Activated CD4-positive, alpha-beta memory T cell treated with anti-CD3 and anti-CD28 coated beads for 36 hours (primary cell): ENCODE measurements at regions of chr5 and their contacts with region 1.

Region 1: GRCh38 chr5:41875121-41875520 is 4.9 kb upstream of the OXCT1 start:
- DNase-seq: no peak
- H3K4me3 Mint-ChIP-seq: no peak overlapping the region
- H3K27ac Mint-ChIP-seq: no peak overlapping the region
- H3K4me1 Mint-ChIP-seq: peaks cover 24% of the 10 kb centered on the region
- H3K27me3 Mint-ChIP-seq: peaks cover 1% of the 10 kb centered on the region

Region 2: DNA sequence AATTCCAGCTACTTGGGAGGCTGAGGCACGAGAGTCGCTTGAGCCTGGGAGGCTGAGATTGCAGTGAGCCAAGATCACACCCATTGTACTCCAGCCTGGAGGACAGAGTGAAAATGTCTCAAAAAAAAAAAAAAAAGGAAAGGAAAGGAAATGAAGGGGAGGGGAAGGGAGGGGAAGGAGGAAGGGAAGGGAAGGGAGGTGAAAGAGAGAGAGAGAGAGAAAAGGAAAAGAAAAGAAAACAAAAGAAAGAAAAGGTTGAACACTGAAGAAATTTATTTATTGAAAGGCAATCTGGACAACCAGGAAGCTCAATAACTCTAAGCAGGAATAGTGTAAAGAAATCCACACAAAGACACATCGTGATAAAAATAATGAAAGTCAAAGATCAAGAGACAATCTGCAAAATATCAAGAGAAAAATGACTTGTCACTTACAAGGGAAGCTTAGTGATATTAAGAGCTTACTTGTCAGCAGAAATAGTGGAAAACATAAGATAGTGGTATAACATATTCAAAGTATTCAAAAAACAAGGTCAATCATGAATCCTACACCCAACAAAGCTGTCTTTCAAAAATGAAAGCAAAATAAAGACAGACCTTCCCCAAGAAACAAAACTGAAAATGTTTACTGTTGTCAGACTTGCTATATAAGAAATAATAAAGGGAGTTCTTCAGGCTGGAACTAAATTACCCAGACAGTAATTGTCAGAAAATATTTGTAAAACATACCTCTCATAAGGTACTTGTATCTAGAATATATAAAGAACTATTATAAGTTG is 18.1 kb after region 1 on chr5:
- CTCF ChIA-PET with region 1: interaction called, 4 read pairs
- POLR2A ChIA-PET with region 1: no interaction called
- intact Hi-C with region 1: loop called (anchors 2 kb)
- DNase-seq: no peak
- H3K4me3 Mint-ChIP-seq: peak overlapping the region; percentile 48
- H3K27ac Mint-ChIP-seq: no peak overlapping the region
- H3K4me1 Mint-ChIP-seq: peaks cover 17% of the 10 kb centered on the region
- H3K27me3 Mint-ChIP-seq: peaks cover 16% of the 10 kb centered on the region

Region 3: GRCh38 chr5:41918105-41918504 is 43.0 kb after region 1 on chr5:
- CTCF ChIA-PET with region 1: no interaction called
- POLR2A ChIA-PET with region 1: no interaction called
- intact Hi-C with region 1: no loop called
- DNase-seq: no peak
- H3K4me3 Mint-ChIP-seq: no peak overlapping the region
- H3K27ac Mint-ChIP-seq: no peak overlapping the region
- H3K4me1 Mint-ChIP-seq: peaks cover 20% of the 10 kb centered on the region
- H3K27me3 Mint-ChIP-seq: no peaks in the 10 kb centered on the region

Region 4: DNA sequence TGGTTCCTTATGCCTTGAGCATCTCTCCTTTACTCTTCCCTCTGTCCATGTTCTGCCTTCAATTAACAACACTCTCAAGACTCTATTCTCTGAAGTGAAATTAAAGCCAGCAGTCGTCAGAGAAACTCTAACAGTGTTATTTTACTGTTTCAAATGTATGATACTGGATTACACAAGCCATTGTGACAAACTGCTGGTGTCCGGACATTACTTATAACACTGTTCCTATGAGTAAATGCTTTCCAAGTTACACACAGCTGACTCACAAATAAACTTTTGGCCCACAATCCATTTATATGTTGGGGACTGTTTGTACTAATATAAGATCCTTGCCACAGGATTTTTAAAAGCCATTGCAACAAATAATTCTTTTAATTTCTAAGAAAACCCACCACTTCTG is 484.9 kb after region 1 on chr5:
- CTCF ChIA-PET with region 1: no interaction called
- POLR2A ChIA-PET with region 1: no interaction called
- intact Hi-C with region 1: no loop called
- DNase-seq: no peak
- H3K4me3 Mint-ChIP-seq: no peak overlapping the region
- H3K27ac Mint-ChIP-seq: no peak overlapping the region
- H3K4me1 Mint-ChIP-seq: no peaks in the 10 kb centered on the region
- H3K27me3 Mint-ChIP-seq: no peaks in the 10 kb centered on the region